ENCODE measurements at regions of chr6 and their contacts with region 1.

Region 1: DNA sequence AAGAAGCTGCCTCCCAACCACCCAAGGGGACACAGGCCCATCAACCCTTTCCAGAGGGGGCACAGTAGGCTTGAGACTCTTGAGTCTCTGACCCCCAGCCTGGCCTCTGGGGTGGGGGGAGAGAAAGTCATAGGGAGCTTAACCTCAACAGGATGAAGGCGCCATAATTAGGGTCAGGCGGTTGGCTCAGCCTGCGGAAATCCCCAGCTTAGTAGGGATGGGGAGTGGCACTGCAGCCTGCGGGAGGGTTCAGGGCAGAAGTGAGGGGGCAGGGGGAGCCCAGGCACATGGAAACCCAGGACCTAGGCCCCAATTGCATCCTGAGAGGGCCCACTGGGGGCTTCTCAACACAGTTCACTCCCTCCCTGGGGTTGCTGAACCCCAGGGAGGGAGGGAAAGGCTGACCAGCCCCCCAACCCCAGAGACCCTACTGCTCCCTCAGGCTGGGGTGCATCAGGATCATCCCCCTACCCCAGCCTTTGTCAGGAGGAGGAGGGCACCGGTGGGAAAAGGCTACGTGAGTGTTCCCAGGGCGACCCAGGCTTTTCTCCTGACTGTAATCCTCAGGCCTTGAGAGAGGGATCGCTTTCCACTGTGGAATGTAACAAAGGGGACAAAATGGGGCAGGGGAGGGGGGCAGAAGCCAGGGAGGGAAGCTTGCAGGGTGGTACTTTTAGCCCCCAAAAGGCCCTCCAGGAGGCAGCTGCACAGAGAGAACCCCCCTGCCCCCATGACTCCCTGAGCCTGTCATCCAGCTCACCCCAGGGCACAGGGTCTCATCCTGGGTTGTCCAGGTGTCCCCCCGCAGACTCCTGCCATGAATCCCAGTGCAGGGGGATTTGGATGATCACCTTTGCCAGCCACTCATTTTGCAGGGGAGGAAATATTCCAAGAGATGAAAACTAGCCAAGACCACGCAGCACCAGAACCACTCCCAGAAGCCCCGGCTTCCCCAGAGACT is 46.4 kb downstream of the MRPL14 start:
- DNase-seq: no peak
- H3K4me3 ChIP-seq: no peak overlapping the region
- H3K27ac ChIP-seq: no peak overlapping the region; a peak in 1 of 4 replicates
- H3K4me1 ChIP-seq: peaks cover 0 to 75% of the 10 kb centered on the region in 2 experiments; a peak in 3 of 4 replicates
- H3K27me3 ChIP-seq: no peaks in the 10 kb centered on the region
- CTCF ChIP-seq: no peak
- EP300 ChIP-seq: no peak
- RAD21 ChIP-seq: no peak

Region 2: GRCh38 chr6:44058617-44059358 is 22.1 kb before region 1 on chr6:
- CTCF ChIA-PET with region 1: interaction called, 203 read pairs
- POLR2A ChIA-PET with region 1: interaction called, 60 read pairs
- DNase-seq: peak; percentile 81
- H3K4me3 ChIP-seq: no peak overlapping the region; a peak in 1 of 4 replicates
- H3K27ac ChIP-seq: peak overlapping the region; percentile 92 to 100
- H3K4me1 ChIP-seq: peaks cover 62 to 82% of the 10 kb centered on the region in 2 experiments
- H3K27me3 ChIP-seq: no peaks in the 10 kb centered on the region
- CTCF ChIP-seq: no peak
- EP300 ChIP-seq: peak; percentile 89 to 93
- RAD21 ChIP-seq: peak; percentile 43

Measured in SK-N-SH (cell line).